ENCODE measurements at regions of chr11 and their contacts with region 1.

Region 1: GRCh38 chr11:128157423-128158298 is 429.7 kb downstream of the ETS1 start:
- DNase-seq: peak; percentile 16 to 85 (median 61)
- ATAC-seq: peak; percentile 90
- H3K4me3 ChIP-seq: peak overlapping the region; percentile 35 to 38
- H3K4me3 Mint-ChIP-seq: peak overlapping the region; percentile 81
- H3K27ac ChIP-seq: no peak overlapping the region
- H3K27ac Mint-ChIP-seq: peak overlapping the region; percentile 77
- H3K4me1 ChIP-seq: no peaks in the 10 kb centered on the region
- H3K4me1 Mint-ChIP-seq: peaks cover 7% of the 10 kb centered on the region
- H3K27me3 ChIP-seq: no peaks in the 10 kb centered on the region
- H3K27me3 Mint-ChIP-seq: no peaks in the 10 kb centered on the region
- CTCF ChIP-seq: peak; percentile 98

Region 2: DNA sequence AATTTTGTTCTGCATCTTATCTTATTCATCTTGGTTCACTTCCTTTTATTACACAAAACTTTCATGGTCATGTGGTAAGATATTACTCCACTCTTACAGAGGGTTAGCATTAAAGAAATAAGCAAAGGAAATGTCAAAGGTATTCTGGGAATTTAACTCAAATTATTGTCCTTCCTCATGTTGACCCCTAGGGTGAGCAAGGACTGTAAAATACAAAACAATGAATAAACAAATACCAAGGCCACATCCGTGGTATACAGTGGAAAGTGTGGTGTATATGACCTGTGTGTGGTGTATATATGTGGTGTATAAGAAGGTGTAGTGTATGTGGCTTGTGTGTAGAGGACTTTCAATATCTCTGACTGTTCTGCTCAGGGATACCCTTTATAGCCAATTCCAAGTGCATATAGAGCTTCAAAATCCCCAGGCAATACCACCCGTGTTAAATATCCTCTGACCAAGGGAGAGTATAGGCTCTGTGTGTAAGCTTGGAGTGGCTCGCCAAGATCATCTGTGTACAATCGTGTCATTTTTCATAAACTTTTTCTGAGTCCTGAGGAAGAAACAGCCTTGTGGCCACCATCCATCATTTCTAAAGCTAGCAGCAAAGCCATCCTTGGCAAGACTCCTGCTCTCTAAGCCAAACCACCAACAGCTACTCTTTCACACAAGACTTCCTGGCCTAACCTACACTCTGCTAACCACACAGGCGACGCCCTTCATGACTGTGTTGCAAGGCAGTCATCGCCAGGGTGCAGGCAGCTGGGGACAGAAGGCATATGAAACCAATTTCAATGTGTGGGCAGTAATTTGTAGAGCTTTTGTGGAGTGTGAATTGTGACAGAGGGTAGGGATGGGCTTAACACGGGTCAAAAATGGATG is 118.3 kb before region 1 on chr11:
- CTCF ChIA-PET with region 1: interaction called, 104 read pairs
- POLR2A ChIA-PET with region 1: interaction called, 24 read pairs
- intact Hi-C with region 1: loop called in 1 of 2 experiments (anchors 2 kb)
- DNase-seq: peak; percentile 48 to 94 (median 79)
- ATAC-seq: peak; percentile 91
- H3K4me3 ChIP-seq: peak overlapping the region; percentile 40 to 50
- H3K4me3 Mint-ChIP-seq: peak overlapping the region; percentile 59
- H3K27ac ChIP-seq: peak overlapping the region; percentile 55 to 80
- H3K27ac Mint-ChIP-seq: peak overlapping the region; percentile 87
- H3K4me1 ChIP-seq: peaks cover 76% of the 10 kb centered on the region
- H3K4me1 Mint-ChIP-seq: peaks cover 56% of the 10 kb centered on the region
- H3K27me3 ChIP-seq: no peaks in the 10 kb centered on the region
- H3K27me3 Mint-ChIP-seq: no peaks in the 10 kb centered on the region
- CTCF ChIP-seq: peak; percentile 22

Region 3: GRCh38 chr11:128086794-128087193 is 70.9 kb before region 1 on chr11:
- CTCF ChIA-PET with region 1: interaction called, 22 read pairs
- POLR2A ChIA-PET with region 1: no interaction called
- intact Hi-C with region 1: no loop called
- DNase-seq: peak in 3 of 9 experiments; percentile 24 to 61 (median 47)
- ATAC-seq: peak; percentile 62
- H3K4me3 ChIP-seq: no peak overlapping the region
- H3K4me3 Mint-ChIP-seq: no peak overlapping the region
- H3K27ac ChIP-seq: no peak overlapping the region
- H3K27ac Mint-ChIP-seq: no peak overlapping the region
- H3K4me1 ChIP-seq: peaks cover 25% of the 10 kb centered on the region
- H3K4me1 Mint-ChIP-seq: peaks cover 45% of the 10 kb centered on the region
- H3K27me3 ChIP-seq: no peaks in the 10 kb centered on the region
- H3K27me3 Mint-ChIP-seq: no peaks in the 10 kb centered on the region
- CTCF ChIP-seq: no peak

Region 4: DNA sequence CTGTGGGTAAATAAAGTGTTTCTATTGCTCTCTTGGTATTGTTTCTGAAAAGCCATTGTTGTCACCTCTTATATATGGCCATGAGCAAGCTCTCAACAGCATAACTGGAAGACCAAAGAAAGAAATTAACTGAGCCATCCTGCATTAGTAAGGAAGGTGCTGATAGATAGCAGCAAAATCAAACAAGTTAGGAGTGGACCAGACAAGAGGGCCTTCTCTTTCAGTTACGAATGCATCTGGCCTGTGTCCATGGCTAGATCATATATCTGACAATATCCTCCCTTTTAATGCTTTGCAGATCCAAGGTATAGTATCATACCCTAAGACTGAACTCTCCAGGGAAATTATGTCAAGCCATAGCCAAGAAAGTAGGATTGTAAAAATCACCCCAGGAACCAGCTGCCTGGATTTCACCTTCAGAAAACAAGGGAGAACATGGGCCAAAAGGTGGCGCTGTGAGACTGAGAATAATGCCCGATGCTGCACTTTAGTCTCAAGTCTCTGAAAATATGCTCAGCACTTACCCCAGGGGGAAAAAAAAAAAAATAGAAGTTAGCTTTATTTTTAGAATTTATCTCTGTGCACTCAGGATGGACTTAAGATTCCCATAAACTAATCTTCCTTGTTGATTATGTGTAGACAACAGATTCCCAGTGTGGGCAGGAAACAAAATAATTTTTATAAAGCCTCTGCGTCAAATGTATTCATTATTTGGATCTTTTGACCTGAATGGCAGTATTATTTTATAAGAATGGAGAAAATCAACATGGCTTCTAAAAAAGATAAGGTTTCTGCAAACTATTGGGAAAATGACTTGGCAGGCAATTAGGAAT is 14.6 kb after region 1 on chr11:
- CTCF ChIA-PET with region 1: interaction called, 178 read pairs
- POLR2A ChIA-PET with region 1: interaction called, 3 read pairs
- intact Hi-C with region 1: no loop called
- DNase-seq: peak; percentile 76 to 91 (median 86)
- ATAC-seq: peak; percentile 89
- H3K4me3 ChIP-seq: no peak overlapping the region
- H3K4me3 Mint-ChIP-seq: no peak overlapping the region
- H3K27ac ChIP-seq: no peak overlapping the region
- H3K27ac Mint-ChIP-seq: no peak overlapping the region
- H3K4me1 ChIP-seq: no peaks in the 10 kb centered on the region
- H3K4me1 Mint-ChIP-seq: peaks cover 3% of the 10 kb centered on the region
- H3K27me3 ChIP-seq: no peaks in the 10 kb centered on the region
- H3K27me3 Mint-ChIP-seq: no peaks in the 10 kb centered on the region
- CTCF ChIP-seq: peak; percentile 88

Region 5: GRCh38 chr11:128776424-128777284 is 619.0 kb after region 1 on chr11:
- CTCF ChIA-PET with region 1: interaction called, 14 read pairs
- POLR2A ChIA-PET with region 1: no interaction called
- intact Hi-C with region 1: no loop called
- DNase-seq: peak in 6 of 9 experiments; percentile 27 to 79 (median 50)
- ATAC-seq: peak; percentile 57
- H3K4me3 ChIP-seq: no peak overlapping the region
- H3K4me3 Mint-ChIP-seq: no peak overlapping the region
- H3K27ac ChIP-seq: peak overlapping the region in 1 of 2 experiments; percentile 53
- H3K27ac Mint-ChIP-seq: peak overlapping the region; percentile 75
- H3K4me1 ChIP-seq: peaks cover 32% of the 10 kb centered on the region
- H3K4me1 Mint-ChIP-seq: peaks cover 71% of the 10 kb centered on the region
- H3K27me3 ChIP-seq: no peaks in the 10 kb centered on the region
- H3K27me3 Mint-ChIP-seq: no peaks in the 10 kb centered on the region
- CTCF ChIP-seq: peak; percentile 37

Region 6: DNA sequence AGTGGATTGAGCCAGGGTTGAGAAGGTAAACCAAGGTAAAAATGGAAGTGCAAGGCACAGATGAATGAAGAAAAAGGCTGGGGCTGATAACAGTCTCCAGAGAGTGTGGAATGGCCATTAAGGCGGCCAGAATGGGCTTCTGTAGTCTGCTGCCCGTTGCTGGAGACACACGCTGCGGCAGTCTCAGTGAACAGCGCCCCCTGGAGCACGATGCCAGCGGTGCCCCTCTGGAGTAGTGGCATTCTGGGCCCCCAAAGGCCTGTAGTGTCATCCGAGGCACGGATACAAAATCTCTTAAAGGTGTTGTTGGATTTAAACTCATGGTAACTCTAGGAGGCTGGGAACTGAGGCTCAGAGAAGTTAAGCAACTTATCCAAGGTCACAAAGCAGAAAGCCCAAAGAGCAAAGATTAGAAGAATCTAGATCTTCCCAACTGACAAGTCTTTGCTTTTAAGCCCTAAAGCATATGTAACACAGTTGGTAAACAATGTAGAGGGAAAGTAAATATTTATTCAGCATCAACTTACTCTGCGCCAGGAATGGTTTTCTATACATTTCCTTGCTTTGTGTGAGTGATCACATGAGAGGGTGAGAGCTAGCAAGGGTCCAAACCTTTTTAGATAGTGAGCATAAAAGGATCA is 691.3 kb after region 1 on chr11:
- CTCF ChIA-PET with region 1: interaction called, 17 read pairs
- POLR2A ChIA-PET with region 1: no interaction called
- intact Hi-C with region 1: no loop called
- DNase-seq: peak; percentile 42 to 80 (median 69)
- ATAC-seq: peak; percentile 70
- H3K4me3 ChIP-seq: no peak overlapping the region
- H3K4me3 Mint-ChIP-seq: no peak overlapping the region
- H3K27ac ChIP-seq: no peak overlapping the region
- H3K27ac Mint-ChIP-seq: no peak overlapping the region
- H3K4me1 ChIP-seq: peaks cover 14% of the 10 kb centered on the region
- H3K4me1 Mint-ChIP-seq: peaks cover 28% of the 10 kb centered on the region
- H3K27me3 ChIP-seq: no peaks in the 10 kb centered on the region
- H3K27me3 Mint-ChIP-seq: no peaks in the 10 kb centered on the region
- CTCF ChIP-seq: peak; percentile 73

Region 7: DNA sequence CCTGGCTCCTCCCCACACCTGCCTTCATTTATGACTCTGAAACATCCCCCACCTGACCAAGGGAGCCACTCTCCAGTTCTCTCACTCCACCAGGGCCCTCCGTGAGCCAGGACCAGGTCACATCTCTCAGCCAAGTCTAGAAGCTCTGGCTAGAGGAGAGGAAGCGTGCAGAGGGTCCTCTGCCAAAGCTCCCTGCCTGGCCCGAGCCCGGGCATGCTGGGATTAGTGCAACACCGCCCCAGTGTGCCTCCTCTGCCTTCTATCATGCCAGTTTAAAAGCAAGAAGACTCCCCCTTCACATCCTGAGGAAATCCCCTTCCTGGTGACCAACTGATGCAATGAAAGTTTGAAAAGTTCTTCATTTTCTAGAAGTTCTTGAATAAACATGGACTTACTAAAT is 761.6 kb after region 1 on chr11:
- CTCF ChIA-PET with region 1: no interaction called
- POLR2A ChIA-PET with region 1: no interaction called
- intact Hi-C with region 1: no loop called
- DNase-seq: no peak
- ATAC-seq: no peak
- H3K4me3 ChIP-seq: no peak overlapping the region
- H3K4me3 Mint-ChIP-seq: no peak overlapping the region
- H3K27ac ChIP-seq: no peak overlapping the region
- H3K27ac Mint-ChIP-seq: no peak overlapping the region
- H3K4me1 ChIP-seq: no peaks in the 10 kb centered on the region
- H3K4me1 Mint-ChIP-seq: no peaks in the 10 kb centered on the region
- H3K27me3 ChIP-seq: no peaks in the 10 kb centered on the region
- H3K27me3 Mint-ChIP-seq: peaks cover 9% of the 10 kb centered on the region
- CTCF ChIP-seq: no peak

Region 8: GRCh38 chr11:128956401-128957201 is 798.9 kb after region 1 on chr11:
- CTCF ChIA-PET with region 1: interaction called, 12 read pairs
- POLR2A ChIA-PET with region 1: no interaction called
- intact Hi-C with region 1: loop called in 1 of 2 experiments (anchors 5 kb)
- DNase-seq: peak in 3 of 9 experiments; percentile 12 to 66 (median 59)
- ATAC-seq: no peak
- H3K4me3 ChIP-seq: no peak overlapping the region
- H3K4me3 Mint-ChIP-seq: no peak overlapping the region
- H3K27ac ChIP-seq: no peak overlapping the region
- H3K27ac Mint-ChIP-seq: no peak overlapping the region
- H3K4me1 ChIP-seq: no peaks in the 10 kb centered on the region
- H3K4me1 Mint-ChIP-seq: peaks cover 2% of the 10 kb centered on the region
- H3K27me3 ChIP-seq: no peaks in the 10 kb centered on the region
- H3K27me3 Mint-ChIP-seq: peaks cover 8% of the 10 kb centered on the region
- CTCF ChIP-seq: peak; percentile 70

Region 9: DNA sequence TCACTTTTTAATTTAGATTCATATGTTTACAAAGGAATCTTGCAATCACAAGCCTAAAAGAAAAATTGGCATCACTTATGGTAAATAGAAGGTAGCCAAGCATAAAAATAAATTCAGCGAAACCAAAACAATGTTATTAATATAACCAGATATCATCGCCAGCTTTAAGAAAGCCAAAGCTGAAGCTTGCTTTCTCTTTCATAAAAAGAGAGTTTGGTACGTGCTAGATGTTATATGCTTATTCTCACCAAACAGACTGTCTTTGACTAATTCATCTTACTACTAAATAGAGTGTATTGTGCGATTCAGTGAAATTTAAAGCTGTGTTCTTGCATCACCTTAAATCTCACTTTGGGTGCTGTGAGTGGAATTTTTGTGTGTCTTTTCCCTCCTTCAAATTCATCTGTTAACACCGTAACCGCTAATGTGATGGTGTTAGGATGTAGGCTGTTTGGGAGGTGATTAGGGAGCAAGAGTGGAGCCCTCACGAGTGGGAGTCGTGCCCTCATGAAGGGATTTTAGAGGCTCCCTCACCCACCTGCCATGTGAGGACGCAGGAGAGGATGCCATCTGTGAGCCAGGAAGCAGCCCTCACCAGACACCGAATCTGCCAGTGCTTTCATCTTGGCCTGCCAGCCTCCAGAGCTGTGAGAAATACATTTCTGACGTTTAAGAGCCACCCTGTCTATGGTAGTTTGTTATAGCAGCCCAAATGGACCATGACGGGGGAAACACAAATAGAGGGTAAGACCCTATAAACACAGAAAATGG is 1523.9 kb after region 1 on chr11:
- CTCF ChIA-PET with region 1: no interaction called
- POLR2A ChIA-PET with region 1: no interaction called
- intact Hi-C with region 1: no loop called
- DNase-seq: no peak
- ATAC-seq: no peak
- H3K4me3 ChIP-seq: no peak overlapping the region
- H3K4me3 Mint-ChIP-seq: no peak overlapping the region
- H3K27ac ChIP-seq: no peak overlapping the region
- H3K27ac Mint-ChIP-seq: no peak overlapping the region
- H3K4me1 ChIP-seq: no peaks in the 10 kb centered on the region
- H3K4me1 Mint-ChIP-seq: no peaks in the 10 kb centered on the region
- H3K27me3 ChIP-seq: no peaks in the 10 kb centered on the region
- H3K27me3 Mint-ChIP-seq: peaks cover 4% of the 10 kb centered on the region
- CTCF ChIP-seq: no peak